ENCODE measurements at regions of chr3 and their contacts with region 1.

Region 1: DNA sequence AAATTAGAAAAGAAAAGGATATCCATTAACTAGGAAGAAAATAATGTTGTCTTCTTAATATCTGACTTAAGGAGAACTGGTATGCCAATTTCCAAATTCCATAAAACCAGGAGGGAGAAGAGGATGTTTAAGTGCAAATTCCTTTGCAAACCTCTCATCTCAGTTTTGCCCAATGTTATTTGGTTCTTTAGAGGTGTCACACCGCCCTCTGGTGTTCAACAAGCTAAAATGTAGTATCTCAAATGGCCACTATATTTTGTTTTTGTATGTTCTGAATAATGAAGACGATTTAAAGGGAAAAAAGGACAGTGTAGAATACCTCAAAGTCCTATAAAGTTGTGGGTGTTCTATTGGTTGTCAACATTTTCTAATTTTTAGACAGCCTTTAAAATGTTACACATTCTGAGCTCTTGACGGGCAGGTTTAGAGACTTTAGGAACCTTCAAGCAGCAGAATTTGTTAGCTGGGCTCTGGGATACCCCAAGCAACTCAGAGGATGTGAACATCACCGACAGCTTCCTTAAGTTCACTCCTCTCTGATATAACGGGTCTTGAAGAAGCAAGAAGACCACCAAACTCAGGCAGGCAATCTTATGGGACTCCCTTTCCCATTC is 458.3 kb downstream of the MFSD1 start:
- DNase-seq: peak; percentile 24
- H3K4me3 Mint-ChIP-seq: no peak overlapping the region
- H3K27ac Mint-ChIP-seq: no peak overlapping the region
- H3K4me1 Mint-ChIP-seq: no peaks in the 10 kb centered on the region
- H3K27me3 Mint-ChIP-seq: peaks cover 8% of the 10 kb centered on the region

Region 2: GRCh38 chr3:158790901-158791589 is 469.1 kb before region 1 on chr3:
- CTCF ChIA-PET with region 1: interaction called, 4 read pairs
- POLR2A ChIA-PET with region 1: no interaction called
- intact Hi-C with region 1: loop called (anchors 1 kb)
- DNase-seq: peak; percentile 23
- H3K4me3 Mint-ChIP-seq: peak overlapping the region; percentile 61
- H3K27ac Mint-ChIP-seq: no peak overlapping the region
- H3K4me1 Mint-ChIP-seq: peaks cover 3% of the 10 kb centered on the region
- H3K27me3 Mint-ChIP-seq: no peaks in the 10 kb centered on the region

Region 3: DNA sequence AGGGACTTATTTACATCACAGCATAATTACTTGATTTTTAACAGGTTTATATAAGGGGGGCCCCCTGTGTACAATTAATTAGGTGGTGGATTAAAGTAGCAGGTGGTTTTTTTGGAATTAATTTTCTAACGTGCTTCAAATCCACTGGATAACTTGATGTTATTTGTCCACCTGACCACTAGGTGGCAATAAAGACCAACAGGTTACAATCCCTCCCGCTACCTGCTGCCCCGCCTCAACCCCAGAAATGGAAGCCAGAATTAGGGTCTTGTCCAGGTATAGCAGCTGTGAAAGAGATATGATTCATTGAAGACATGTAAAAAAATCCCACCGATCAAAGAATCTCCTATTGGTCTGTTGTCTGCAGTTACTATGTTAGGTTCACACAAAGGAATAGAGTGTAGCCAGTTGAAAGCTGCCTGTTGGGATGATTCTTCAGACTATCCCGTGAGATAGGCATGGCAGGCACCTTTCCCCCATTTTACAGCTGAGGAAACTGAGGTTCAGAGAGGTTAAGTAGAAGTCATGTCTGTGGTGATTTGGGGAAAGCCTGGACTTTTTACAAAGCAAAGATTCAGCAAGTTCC is 414.3 kb before region 1 on chr3:
- CTCF ChIA-PET with region 1: interaction called, 90 read pairs
- POLR2A ChIA-PET with region 1: no interaction called
- intact Hi-C with region 1: loop called (anchors 1 kb)
- DNase-seq: peak; percentile 33
- H3K4me3 Mint-ChIP-seq: no peak overlapping the region
- H3K27ac Mint-ChIP-seq: no peak overlapping the region
- H3K4me1 Mint-ChIP-seq: no peaks in the 10 kb centered on the region
- H3K27me3 Mint-ChIP-seq: no peaks in the 10 kb centered on the region

Region 4: DNA sequence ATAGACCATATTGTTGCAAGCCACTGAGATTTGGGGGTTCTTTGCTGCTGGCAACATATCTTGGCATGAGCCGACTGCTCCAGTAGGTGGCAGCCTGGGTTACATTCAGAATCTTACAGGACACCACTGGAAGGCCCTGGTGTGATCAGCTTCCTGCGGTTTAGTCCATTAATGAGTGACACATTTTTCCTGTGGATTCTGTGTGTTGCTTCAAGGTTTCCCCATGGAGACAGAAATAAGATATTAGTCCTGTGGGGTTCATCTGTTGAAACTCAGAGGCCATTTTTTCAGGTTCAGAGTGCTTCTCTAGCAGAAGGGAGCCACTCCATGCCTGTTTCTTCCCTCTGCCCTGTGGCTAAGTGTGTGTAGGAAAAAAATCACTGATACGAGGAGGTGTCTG is 342.1 kb before region 1 on chr3:
- CTCF ChIA-PET with region 1: interaction called, 3 read pairs
- POLR2A ChIA-PET with region 1: no interaction called
- intact Hi-C with region 1: loop called (anchors 1 kb)
- DNase-seq: peak; percentile 25
- H3K4me3 Mint-ChIP-seq: no peak overlapping the region
- H3K27ac Mint-ChIP-seq: no peak overlapping the region
- H3K4me1 Mint-ChIP-seq: no peaks in the 10 kb centered on the region
- H3K27me3 Mint-ChIP-seq: no peaks in the 10 kb centered on the region

Region 5: DNA sequence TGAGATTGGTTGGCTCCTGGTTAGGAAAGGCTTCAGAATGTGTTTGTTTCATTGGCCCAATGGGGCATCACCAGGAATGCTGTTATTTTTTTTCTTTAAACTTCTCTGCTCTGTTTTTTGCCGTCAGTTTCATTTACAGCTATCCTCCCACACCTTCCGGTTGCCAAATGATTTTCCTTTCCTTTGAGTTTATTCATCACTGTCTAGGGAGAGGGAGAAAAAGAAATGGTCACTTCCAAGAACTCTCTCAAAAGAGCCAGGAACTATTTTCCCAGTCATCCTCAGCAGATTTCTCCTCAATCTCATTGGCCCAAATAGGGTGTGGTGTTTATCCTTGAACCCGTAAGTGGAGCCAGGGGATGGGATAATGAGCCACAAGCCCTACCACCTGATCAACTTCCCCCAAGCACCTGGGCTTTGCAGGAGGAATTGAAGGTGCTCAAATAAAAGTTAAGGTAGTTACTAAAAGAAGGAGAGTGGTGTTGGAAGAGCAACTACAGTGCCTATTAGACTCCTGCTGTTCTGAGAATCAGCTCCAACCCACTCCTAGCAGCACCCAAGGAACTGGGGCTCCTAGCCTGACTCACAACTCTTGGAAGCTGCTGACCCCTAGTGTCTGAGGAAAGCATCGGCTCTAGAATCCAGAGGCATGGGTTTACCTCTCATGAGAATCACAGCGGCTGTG is 544.7 kb after region 1 on chr3:
- CTCF ChIA-PET with region 1: interaction called, 3 read pairs
- POLR2A ChIA-PET with region 1: no interaction called
- intact Hi-C with region 1: loop called (anchors 1 kb)
- DNase-seq: peak; percentile 49
- H3K4me3 Mint-ChIP-seq: no peak overlapping the region
- H3K27ac Mint-ChIP-seq: no peak overlapping the region
- H3K4me1 Mint-ChIP-seq: no peaks in the 10 kb centered on the region
- H3K27me3 Mint-ChIP-seq: peaks cover 2% of the 10 kb centered on the region

Region 6: DNA sequence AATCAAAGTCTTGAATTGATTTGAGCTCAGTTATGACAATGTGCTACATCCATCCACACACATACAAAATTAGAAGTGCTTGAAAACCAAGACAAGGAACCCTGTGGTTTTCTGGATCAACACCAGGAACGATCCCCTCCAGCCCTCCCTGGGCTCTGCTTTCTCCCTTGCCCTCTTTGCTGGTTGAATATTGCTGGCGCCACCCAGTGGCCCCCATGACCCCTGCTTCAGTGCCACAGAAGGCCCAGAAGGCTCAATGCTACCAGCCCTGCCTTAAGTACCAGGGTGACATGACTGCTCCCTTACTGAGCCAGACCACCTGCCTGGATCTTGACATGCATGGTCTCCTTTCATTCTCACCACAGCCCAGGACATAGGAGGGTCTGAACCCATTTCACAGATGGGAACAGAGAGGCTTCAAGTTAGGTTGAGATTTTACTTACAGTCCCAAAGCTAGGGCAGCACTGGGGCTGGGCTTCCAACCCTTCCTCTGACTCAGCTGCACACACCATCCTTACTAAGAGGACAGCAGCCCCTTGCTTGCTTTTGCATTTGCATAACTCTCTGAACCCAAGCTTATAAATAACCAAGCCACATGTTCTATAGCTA is 743.5 kb after region 1 on chr3:
- CTCF ChIA-PET with region 1: interaction called, 3 read pairs
- POLR2A ChIA-PET with region 1: no interaction called
- intact Hi-C with region 1: loop called (anchors 10 kb)
- DNase-seq: peak; percentile 62
- H3K4me3 Mint-ChIP-seq: no peak overlapping the region
- H3K27ac Mint-ChIP-seq: no peak overlapping the region
- H3K4me1 Mint-ChIP-seq: no peaks in the 10 kb centered on the region
- H3K27me3 Mint-ChIP-seq: no peaks in the 10 kb centered on the region